CD4-positive, alpha-beta memory T cell (primary cell): ENCODE measurements at regions of chr6 and their contacts with region 1.

Region 1: DNA sequence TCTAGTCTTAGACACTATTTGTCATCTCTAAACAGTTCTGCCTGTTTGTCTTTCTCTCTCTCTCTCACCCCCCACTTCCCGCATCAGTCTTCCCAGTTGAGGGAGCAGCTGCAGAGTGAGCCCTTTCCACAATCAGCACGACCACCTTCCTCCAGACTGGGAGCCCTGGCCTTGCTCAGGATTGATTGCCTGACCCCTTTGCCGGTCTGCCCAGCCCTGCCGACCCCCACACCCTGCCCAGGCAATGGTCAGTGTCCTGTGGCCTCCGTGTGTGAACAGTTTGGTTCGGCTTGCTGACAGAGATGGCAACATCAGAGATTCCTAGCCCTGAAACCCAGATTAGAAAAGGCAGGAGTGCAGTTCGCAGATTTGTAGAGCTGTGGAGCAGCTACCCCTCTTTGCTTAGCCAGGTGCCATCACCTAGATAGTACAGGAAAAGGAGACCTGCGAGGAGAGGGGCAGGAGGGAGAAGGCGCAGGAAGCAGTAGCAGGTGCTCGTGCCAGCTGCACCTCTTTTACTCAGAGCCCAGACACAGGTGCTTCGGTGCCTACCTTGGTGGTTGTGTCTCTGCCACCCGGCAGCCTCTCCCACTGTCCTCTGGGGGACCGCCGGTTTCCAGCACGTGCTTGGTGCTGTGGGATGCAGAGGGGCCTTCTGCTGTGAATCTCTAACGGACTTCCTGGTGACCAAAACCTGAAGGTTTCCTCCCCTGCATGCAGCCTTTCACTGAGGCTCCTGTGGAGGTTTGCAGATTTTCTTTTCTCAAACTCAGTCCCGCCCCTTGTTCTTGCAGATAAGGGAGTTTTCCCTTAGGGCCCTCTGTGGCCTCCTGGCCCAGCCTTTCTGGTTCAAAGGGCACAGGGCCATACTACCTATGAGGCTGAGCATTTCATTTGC is 92.4 kb downstream of the SCML4 start:
- DNase-seq: peak; percentile 43 to 61 (median 46)
- H3K4me3 ChIP-seq: peak overlapping the region; percentile 71 to 88
- H3K4me3 Mint-ChIP-seq: peak overlapping the region; percentile 91 to 99 (median 96)
- H3K27ac ChIP-seq: peak overlapping the region; percentile 84
- H3K27ac Mint-ChIP-seq: peak overlapping the region; percentile 79 to 97 (median 92)
- H3K4me1 ChIP-seq: peaks cover 90% of the 10 kb centered on the region
- H3K4me1 Mint-ChIP-seq: peaks cover 53 to 96% (median 73%) of the 10 kb centered on the region in 4 donors
- H3K27me3 ChIP-seq: no peaks in the 10 kb centered on the region
- H3K27me3 Mint-ChIP-seq: no peaks in the 10 kb centered on the region

Region 2: DNA sequence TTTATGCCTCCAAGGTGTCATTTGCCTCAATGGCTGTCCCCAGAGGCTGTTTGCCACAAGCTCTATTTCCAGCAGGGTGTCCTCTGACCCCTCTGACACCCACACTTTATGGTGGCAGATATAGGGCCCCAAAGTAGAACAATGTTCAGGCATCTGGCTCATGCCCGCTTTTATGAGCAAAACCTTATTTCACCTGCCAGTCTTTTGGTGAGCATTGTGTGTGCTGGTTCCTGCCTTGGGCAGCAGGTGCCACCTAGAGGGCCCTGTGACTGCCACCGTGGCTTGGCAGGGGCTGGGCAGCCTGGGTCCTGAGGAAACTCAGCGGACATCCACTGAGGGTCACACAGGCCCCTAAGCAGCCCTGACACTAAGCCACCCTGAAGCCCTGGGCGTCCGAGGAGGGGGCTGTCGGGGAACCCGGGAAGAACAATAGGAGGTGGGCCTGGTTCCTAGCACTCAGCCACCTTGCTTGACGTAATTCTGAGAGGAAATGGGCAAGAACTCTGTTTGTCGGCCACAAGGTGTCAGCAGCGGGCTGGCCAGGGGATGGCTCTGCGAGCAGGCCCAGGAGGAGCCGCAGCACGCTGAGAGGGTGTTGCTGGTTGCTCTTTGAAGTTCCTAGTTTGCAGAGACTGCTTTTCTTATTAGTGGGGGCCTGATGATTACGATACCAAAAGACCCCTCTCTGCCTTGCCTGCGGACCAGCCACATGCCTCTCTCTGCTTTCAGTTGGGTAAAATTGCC is 56.5 kb before region 1 on chr6:
- CTCF ChIA-PET with region 1: interaction called, 6 read pairs
- POLR2A ChIA-PET with region 1: no interaction called
- intact Hi-C with region 1: loop called (anchors 2 kb)
- DNase-seq: peak; percentile 83 to 86 (median 84)
- H3K4me3 ChIP-seq: peak overlapping the region in 1 of 2 donors; percentile 6
- H3K4me3 Mint-ChIP-seq: peak overlapping the region in 6 of 8 donors; percentile 49 to 81 (median 64)
- H3K27ac ChIP-seq: no peak overlapping the region
- H3K27ac Mint-ChIP-seq: peak overlapping the region; percentile 32 to 92 (median 91)
- H3K4me1 ChIP-seq: peaks cover 17% of the 10 kb centered on the region
- H3K4me1 Mint-ChIP-seq: peaks cover 6 to 14% (median 11%) of the 10 kb centered on the region in 4 donors
- H3K27me3 ChIP-seq: no peaks in the 10 kb centered on the region
- H3K27me3 Mint-ChIP-seq: no peaks in the 10 kb centered on the region

Region 3: GRCh38 chr6:107716688-107717089 is 15.0 kb before region 1 on chr6:
- CTCF ChIA-PET with region 1: interaction called, 43 read pairs
- POLR2A ChIA-PET with region 1: interaction called, 17 read pairs
- intact Hi-C with region 1: loop called (anchors 1 kb)
- DNase-seq: peak; percentile 83 to 92 (median 87)
- H3K4me3 ChIP-seq: no peak overlapping the region
- H3K4me3 Mint-ChIP-seq: peak overlapping the region in 7 of 8 donors; percentile 40 to 78 (median 74)
- H3K27ac ChIP-seq: no peak overlapping the region
- H3K27ac Mint-ChIP-seq: peak overlapping the region; percentile 89 to 98 (median 94)
- H3K4me1 ChIP-seq: peaks cover 66% of the 10 kb centered on the region
- H3K4me1 Mint-ChIP-seq: peaks cover 57 to 90% (median 75%) of the 10 kb centered on the region in 4 donors
- H3K27me3 ChIP-seq: no peaks in the 10 kb centered on the region
- H3K27me3 Mint-ChIP-seq: no peaks in the 10 kb centered on the region

Region 4: GRCh38 chr6:107786709-107787588 is 55.3 kb after region 1 on chr6:
- CTCF ChIA-PET with region 1: interaction called, 56 read pairs
- POLR2A ChIA-PET with region 1: interaction called, 88 read pairs
- intact Hi-C with region 1: loop called (anchors 1 kb)
- DNase-seq: peak; percentile 46 to 62 (median 58)
- H3K4me3 ChIP-seq: peak overlapping the region in 1 of 2 donors; percentile 33
- H3K4me3 Mint-ChIP-seq: peak overlapping the region; percentile 78 to 98 (median 84)
- H3K27ac ChIP-seq: peak overlapping the region; percentile 45
- H3K27ac Mint-ChIP-seq: peak overlapping the region; percentile 85 to 98 (median 95)
- H3K4me1 ChIP-seq: peaks cover 89% of the 10 kb centered on the region
- H3K4me1 Mint-ChIP-seq: peaks cover 68 to 91% (median 78%) of the 10 kb centered on the region in 4 donors
- H3K27me3 ChIP-seq: no peaks in the 10 kb centered on the region
- H3K27me3 Mint-ChIP-seq: no peaks in the 10 kb centered on the region

Region 5: GRCh38 chr6:107866606-107867301 is 135.1 kb after region 1 on chr6:
- CTCF ChIA-PET with region 1: interaction called, 78 read pairs
- POLR2A ChIA-PET with region 1: interaction called, 6 read pairs
- intact Hi-C with region 1: loop called (anchors 1 kb)
- DNase-seq: peak; percentile 43 to 52 (median 49)
- H3K4me3 ChIP-seq: no peak overlapping the region
- H3K4me3 Mint-ChIP-seq: peak overlapping the region in 2 of 8 donors; percentile 11 to 20
- H3K27ac ChIP-seq: no peak overlapping the region
- H3K27ac Mint-ChIP-seq: peak overlapping the region in 3 of 7 donors; percentile 22 to 75 (median 42)
- H3K4me1 ChIP-seq: peaks cover 6% of the 10 kb centered on the region
- H3K4me1 Mint-ChIP-seq: peaks cover 0 to 3% (median 2%) of the 10 kb centered on the region in 4 donors
- H3K27me3 ChIP-seq: no peaks in the 10 kb centered on the region
- H3K27me3 Mint-ChIP-seq: peaks cover 0 to 2% of the 10 kb centered on the region in 2 donors